Prostate gland (tissue), 2 donors: ENCODE measurements at regions of chr15 and their contacts with region 1.

Region 1: DNA sequence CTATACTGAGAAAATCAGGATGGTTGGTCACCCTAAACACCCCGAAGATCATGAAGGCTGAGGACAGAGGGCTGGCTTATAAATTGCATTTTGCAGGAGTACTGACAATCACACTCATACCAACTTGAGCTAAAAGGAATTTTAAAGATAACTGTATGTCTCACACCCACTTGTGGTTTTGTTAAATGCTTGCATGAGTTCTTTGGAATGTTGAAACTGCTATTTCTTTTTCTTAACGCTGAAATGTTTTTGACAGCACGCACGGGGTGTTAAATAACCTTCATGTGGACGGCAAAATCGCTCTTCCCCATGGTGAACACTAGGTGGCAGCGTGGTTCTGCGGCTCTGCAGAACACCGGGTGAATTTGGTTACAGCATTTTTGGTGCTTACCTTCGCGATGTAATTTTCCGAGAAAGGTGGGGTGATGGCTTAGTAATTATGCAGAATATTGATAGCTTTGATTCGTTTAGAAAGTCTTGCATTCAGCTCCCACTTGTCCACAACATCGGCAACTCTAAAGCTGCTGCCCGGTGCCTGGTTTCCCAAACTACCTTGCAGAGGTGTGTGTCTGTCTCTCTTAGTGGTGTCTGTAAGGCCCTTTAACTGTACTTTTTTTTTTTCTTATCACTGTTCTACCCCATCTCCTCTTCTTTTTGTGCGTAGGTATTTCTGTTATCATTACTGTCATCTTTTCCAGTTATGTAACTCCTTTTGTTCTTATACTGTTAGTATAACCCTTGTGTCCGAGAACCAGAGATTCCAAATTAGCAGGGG is 51.7 kb downstream of the ARNT2 start:
- DNase-seq: peak; percentile 54
- H3K4me3 ChIP-seq: no peak overlapping the region
- H3K27ac ChIP-seq: no peak overlapping the region
- H3K4me1 ChIP-seq: no peaks in the 10 kb centered on the region
- H3K27me3 ChIP-seq: no peaks in the 10 kb centered on the region
- CTCF ChIP-seq: peak; percentile 82 to 85 (median 84)
- POLR2A ChIP-seq: no peak

Region 2: DNA sequence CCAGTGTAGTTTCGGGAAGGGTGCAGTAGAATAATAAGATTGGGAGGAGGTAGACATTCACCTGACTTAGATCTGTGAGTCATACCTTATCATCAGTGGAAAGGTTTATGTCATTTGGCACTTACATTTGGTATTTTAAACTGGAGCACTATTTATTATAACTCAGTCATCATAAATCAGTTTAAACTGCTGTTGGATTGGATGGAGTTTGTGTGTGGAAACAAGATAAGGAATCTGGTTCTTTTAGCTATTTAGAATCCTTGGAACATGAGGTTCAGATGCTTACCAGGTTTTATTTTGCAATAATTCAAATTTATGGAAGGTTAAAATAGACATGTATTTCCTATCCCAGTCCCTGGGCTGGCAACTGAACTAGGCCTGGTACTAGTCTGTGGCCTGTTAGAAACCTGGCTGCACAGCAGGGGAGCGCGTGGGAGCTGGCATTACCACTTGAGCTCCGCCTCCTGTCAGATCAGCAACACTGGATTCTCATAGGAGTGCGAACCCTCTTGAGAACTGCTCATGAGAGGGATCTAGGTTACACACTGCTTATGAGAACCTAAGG is 361.9 kb before region 1 on chr15:
- intact Hi-C with region 1: no loop called
- DNase-seq: peak; percentile 83
- H3K4me3 ChIP-seq: no peak overlapping the region
- H3K27ac ChIP-seq: peak overlapping the region; percentile 12 to 65
- H3K4me1 ChIP-seq: peaks cover 6% of the 10 kb centered on the region
- H3K27me3 ChIP-seq: no peaks in the 10 kb centered on the region
- CTCF ChIP-seq: no peak
- POLR2A ChIP-seq: no peak

Region 3: DNA sequence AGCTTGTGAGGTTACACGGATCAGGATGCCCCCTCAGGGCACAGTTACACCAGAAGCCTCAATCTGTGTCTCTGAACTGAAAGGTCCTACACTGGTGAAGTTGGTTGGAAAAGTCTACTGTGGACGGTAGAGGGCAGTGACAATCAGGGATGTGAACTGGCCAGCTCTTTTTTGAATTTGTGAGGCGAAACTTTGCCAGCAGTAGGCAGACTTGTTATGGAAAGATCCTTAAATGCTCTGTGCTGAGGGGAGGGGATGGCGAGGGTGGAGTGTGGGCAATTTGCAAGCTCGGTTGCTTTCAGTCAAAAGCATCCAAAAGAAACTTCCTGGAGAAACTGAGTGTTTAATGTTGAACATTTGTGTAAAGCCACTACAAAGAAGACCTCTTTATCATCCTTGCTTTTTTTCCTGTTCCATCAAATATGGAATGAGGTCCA is 111.9 kb after region 1 on chr15:
- intact Hi-C with region 1: loop called (anchors 2 kb)
- DNase-seq: peak; percentile 59
- H3K4me3 ChIP-seq: no peak overlapping the region
- H3K27ac ChIP-seq: no peak overlapping the region
- H3K4me1 ChIP-seq: no peaks in the 10 kb centered on the region
- H3K27me3 ChIP-seq: no peaks in the 10 kb centered on the region
- CTCF ChIP-seq: peak in 3 of 4 experiments; percentile 63 to 79 (median 76)
- POLR2A ChIP-seq: no peak

Region 4: DNA sequence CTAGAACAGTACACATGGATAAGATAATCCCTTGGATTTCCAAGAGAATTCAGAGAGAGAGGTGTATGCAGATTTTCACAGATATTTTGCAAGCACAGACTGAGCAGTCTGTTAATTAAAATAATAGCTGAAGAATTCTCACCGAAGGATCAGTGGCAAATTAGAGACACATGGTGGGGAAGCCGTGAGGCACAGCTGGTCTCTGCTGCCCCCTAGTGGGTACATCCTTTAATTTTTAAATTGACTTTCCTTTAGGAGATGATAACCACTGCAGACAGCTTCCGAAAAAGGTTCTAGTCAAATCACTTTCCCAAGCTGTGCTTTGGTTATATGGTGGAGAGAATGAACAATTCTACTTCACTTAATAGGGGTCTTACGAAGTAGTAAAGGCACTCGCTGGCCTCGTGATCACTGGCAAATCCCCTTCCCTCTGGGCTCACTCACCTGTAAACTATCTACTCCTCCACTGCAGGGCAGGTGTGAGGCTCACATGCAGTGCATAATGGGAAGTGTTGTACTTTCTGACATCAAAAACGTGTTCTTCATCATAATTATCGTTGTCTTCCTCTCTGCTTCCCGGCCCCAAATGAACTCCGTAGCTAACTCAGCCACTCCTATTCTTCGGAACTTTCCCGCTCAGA is 514.3 kb after region 1 on chr15:
- intact Hi-C with region 1: loop called (anchors 2 kb)
- DNase-seq: peak; percentile 61
- H3K4me3 ChIP-seq: no peak overlapping the region
- H3K27ac ChIP-seq: no peak overlapping the region
- H3K4me1 ChIP-seq: no peaks in the 10 kb centered on the region
- H3K27me3 ChIP-seq: no peaks in the 10 kb centered on the region
- CTCF ChIP-seq: peak; percentile 84 to 95 (median 88)
- POLR2A ChIP-seq: no peak

Region 5: DNA sequence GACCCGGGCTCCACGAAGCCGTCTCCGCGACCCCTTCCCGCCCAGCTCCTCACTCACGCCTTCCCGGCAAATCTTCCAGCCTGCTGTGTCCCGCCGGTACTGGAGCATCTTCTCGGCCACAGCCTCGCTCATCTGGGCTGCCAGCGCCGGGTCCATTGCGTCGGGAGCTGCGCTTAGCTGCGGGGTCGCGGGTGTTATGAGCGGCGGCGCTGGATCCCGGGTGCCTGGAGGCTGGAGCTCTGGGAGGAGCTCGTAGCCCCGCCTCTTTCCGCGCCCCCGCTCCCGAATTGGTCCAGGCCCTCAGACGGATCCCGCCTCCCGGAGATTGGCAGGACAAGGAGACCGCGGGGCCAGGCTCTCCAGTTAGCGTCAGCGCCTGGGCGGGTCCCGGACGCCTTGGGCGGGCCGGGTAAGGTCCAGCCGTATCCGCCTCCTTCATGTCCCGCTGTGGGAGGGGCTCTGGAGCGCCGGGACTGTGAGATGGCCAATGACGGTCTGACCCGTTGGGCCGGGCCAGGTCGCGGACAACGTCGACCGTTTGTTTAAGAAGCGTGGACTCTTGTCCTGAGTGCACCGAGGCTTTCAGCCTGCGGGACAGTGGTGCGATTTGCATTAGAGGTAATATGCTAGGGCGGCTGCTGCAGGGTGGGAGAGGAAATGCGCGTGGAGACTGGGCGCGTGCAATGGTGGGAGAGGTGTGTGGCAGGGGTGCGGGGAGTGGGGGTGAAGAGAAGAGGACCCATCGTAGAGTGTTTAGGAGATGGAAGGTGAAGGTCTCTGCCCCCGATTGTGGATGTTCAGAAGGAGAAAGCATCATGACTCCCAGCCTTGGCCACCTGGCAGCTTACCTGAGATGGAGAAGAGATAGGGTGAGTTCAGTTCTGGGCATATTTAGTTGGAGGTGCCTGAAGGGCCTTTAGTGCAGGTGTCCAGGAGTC is 868.4 kb after region 1 on chr15 and contains the start of gene STARD5:
- intact Hi-C with region 1: no loop called
- DNase-seq: peak; percentile 98
- H3K4me3 ChIP-seq: peak within 1 kb of the TSS; percentile 54 to 60
- H3K27ac ChIP-seq: peak within 1 kb of the TSS; percentile 61 to 78
- H3K4me1 ChIP-seq: no peaks in the 10 kb centered on the region
- H3K27me3 ChIP-seq: no peaks in the 10 kb centered on the region
- CTCF ChIP-seq: peak in 1 of 4 experiments; percentile 3
- POLR2A ChIP-seq: peak; percentile 96
- total RNA-seq, gene STARD5: 19.6 to 23.2 TPM